ENCODE measurements at regions of chr14 and their contacts with region 1.

Region 1: DNA sequence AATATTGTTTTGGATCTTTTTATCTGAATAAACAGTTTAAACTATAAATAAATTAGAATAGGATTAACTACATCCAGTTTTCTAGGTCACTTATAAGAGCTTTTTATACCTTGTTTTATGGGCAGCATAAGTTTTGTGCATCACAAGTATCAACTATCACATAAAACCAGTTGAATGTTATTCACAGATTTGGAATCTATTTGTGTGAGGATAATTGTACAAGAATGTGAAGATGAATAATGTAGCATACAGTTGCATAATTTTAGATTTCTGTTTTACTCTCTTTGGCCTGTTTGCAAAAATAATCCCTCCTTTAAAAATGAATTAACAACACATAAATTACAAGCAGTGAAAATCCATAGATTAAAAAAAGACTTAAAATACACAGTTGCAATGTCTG is 88.8 kb downstream of the SCFD1 start:
- DNase-seq: no peak
- ATAC-seq: no peak
- H3K4me3 Mint-ChIP-seq: no peak overlapping the region
- H3K27ac Mint-ChIP-seq: no peak overlapping the region
- H3K4me1 Mint-ChIP-seq: no peaks in the 10 kb centered on the region
- H3K27me3 Mint-ChIP-seq: no peaks in the 10 kb centered on the region

Region 2: DNA sequence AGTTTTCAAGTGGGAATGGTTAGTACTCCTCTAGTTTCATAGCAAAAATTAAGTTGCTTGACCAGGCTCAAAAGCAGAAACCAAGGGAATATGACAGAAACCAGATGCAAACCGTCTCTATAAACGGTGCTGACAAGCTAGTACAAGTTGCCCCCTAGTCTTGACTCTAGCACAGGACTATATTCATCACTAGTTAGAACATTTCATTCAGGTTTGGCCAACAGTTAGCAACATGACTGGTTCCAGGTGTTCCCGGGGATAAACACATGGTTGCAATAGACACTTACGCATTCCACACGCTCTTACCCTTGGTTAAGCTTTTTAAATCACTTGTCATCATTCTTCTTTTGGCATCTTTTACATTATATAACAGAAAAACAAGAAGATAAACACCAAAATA is 14.9 kb after region 1 on chr14:
- CTCF ChIA-PET with region 1: interaction called, 3 read pairs
- POLR2A ChIA-PET with region 1: interaction called, 12 read pairs
- intact Hi-C with region 1: no loop called
- DNase-seq: no peak
- ATAC-seq: no peak
- H3K4me3 Mint-ChIP-seq: no peak overlapping the region
- H3K27ac Mint-ChIP-seq: no peak overlapping the region
- H3K4me1 Mint-ChIP-seq: peaks cover 6% of the 10 kb centered on the region
- H3K27me3 Mint-ChIP-seq: no peaks in the 10 kb centered on the region

Measured in activated CD4-positive, alpha-beta T cell treated with anti-CD3 and anti-CD28 coated beads for 36 hours (primary cell).